GM13977 (cell line): ENCODE measurements at regions of chr7 and their contacts with region 1.

Region 1: GRCh38 chr7:117458977-117459583 is 20.7 kb upstream of the CFTR start:
- DNase-seq: peak; percentile 23
- CTCF ChIP-seq: peak; percentile 49

Region 2: DNA sequence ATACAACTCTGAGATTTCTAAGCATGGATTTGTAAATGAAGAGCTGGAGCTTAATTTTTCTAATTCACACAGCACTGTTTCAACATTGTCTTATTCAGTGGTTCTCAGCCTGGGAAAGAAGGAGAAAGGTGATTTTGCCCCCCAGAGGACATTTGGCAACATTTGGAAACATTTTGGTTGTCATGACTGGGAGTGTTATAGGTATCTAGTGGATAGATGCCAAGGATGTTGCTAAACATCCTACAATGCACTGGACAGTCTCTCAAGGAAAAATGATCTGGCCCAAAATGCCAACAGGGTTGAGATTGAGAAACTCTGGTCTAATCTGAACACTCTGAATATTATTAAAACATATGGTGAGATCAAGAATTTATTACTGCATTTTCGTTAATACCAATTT is 963.3 kb before region 1 on chr7:
- in situ Hi-C with region 1: no loop called
- DNase-seq: no peak
- CTCF ChIP-seq: no peak

Region 3: GRCh38 chr7:117251687-117252086 is 207.4 kb before region 1 on chr7:
- in situ Hi-C with region 1: no loop called
- DNase-seq: peak; percentile 33
- CTCF ChIP-seq: no peak

Region 4: DNA sequence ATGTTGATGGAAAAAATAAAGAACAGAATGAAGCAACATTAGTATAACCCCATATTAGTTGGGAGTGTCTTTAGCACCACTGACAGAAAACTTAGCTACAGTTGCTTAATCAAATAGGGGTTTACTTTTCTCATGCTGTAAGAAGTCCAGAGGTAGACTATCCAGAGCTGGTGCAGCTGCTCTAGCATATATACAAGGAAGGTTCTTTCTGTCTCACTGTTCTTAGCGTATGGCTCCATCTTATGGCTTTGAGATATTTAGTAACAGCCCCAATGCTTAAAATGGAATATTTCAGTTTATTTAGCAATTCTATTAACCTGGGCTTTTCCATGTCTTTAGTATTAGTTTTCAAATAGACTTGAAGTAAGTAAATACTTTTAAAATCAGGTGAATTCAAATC is 121.1 kb before region 1 on chr7:
- in situ Hi-C with region 1: no loop called
- DNase-seq: no peak
- CTCF ChIP-seq: no peak

Region 5: DNA sequence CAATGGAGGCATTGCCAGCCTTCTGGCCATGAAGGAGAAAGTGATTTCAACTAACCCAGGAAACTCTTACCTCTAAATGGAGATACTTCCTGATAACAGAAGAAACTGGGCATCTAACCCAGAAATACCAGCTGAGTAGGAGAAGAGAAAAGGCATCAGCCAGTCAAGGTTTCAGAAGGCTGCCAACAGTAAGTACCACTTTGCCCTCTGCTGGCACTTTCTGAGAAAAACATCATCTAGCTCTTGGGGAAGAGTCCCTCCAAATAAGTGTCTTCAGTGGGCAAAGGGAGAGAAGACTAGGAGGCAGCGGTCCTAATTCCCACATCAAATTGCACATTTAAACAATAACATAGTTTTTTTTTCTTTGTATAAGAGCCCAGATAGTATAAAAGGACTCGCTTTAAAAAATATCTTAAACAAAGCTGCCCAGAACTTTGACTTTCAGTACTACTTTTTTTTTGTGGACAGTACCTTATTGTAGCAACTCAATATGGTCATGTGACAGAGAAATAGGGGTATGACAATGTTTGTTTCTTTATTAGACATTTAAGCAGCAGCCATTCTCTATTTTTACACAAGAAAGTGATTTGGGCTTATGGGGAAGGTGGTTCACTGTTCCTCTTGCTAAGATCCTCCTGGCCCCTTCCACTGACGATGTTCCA is 256.8 kb after region 1 on chr7:
- in situ Hi-C with region 1: loop called (anchors 25 kb)
- DNase-seq: peak; percentile 48
- CTCF ChIP-seq: peak; percentile 59